PC-3 (cell line): ENCODE measurements at regions of chr3 and their contacts with region 1.

Region 1: GRCh38 chr3:141452036-141452435 is 34.8 kb upstream of the RASA2 start:
- DNase-seq: peak; percentile 52
- ATAC-seq: peak; percentile 56
- H3K4me3 ChIP-seq: no peak overlapping the region
- H3K27ac ChIP-seq: no peak overlapping the region
- H3K4me1 ChIP-seq: peaks cover 20% of the 10 kb centered on the region
- H3K27me3 ChIP-seq: no peaks in the 10 kb centered on the region
- CTCF ChIP-seq: peak; percentile 68

Region 2: DNA sequence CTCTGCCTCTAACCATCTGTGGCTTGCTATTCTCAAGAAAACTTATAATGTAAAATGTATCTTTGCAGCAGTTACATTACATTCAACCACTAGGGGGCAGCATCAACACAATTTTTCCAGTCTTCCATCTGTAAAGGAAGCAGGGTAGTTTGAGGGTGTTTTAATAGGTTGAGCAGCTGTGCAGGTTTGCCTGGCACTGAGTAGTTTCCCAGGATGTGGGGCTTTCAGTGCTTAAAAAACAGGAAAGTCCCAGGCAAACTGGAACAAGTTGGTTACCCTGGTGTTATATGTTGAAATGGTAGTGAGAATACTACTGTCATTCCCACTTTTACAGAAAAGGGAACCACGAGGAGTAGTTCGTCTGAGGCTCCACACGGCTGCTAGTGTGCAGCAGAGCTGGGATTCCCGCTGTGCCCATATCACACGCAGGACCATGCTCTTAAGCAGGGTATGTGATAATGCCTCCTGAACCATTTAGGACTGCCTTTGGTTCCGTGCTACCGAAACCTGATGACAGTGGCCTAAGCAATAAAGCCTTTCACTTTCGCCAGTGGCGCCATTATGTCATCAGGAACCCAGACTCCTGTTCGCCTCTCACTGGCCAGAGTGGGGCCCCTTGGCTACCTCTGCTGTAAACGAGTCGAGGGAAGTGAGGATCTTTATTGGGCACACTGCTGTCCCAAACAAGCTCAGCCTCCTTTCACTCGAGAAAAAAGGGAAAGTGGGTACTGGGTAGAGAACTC is 148.4 kb before region 1 on chr3:
- CTCF ChIA-PET with region 1: interaction called, 7 read pairs
- POLR2A ChIA-PET with region 1: no interaction called
- intact Hi-C with region 1: loop called (anchors 2 kb)
- DNase-seq: peak; percentile 82
- ATAC-seq: peak; percentile 66
- H3K4me3 ChIP-seq: no peak overlapping the region
- H3K27ac ChIP-seq: no peak overlapping the region
- H3K4me1 ChIP-seq: peaks cover 4% of the 10 kb centered on the region; the same call in 1 of the 2 replicates
- H3K27me3 ChIP-seq: no peaks in the 10 kb centered on the region
- CTCF ChIP-seq: peak; percentile 79

Region 3: DNA sequence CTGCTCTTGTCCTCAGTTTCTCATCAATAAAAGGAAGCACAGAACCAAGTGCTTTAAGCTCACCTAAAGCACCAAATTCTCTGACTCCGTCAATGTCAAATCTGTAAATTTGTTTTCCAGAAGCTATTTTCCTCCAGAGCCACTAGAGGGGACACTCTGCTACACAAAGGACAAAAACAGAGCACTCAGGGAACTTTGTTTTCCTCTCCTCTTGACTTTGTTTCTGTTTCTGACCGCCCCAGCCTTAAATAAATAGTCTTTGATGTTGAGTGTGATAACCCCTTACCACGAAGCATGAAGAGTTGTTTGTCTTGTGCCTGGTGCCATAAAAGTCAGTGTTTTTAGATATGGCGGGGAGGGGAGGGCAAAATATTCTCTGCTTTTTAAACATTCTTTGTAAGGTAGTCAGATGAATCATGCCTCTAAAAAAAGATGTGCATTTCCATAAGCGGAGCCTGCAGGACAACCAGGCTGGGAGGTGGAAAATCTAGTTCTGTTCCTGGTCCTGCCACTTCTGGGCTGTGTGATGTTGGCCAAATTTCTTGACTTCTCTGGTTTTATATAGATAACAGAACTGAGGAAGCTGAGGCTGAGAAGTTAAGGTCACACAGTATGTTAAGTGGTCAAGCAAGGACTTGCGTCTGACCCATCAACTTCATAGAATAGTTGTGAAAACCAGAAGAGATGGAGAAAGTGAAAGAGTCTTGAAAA is 91.0 kb before region 1 on chr3:
- CTCF ChIA-PET with region 1: interaction called, 11 read pairs
- POLR2A ChIA-PET with region 1: no interaction called
- intact Hi-C with region 1: loop called (anchors 1 kb)
- DNase-seq: peak; percentile 78
- ATAC-seq: peak; percentile 81
- H3K4me3 ChIP-seq: peak overlapping the region; percentile 39; the same call in 1 of the 2 replicates
- H3K27ac ChIP-seq: peak overlapping the region; percentile 42
- H3K4me1 ChIP-seq: peaks cover 12% of the 10 kb centered on the region
- H3K27me3 ChIP-seq: no peaks in the 10 kb centered on the region
- CTCF ChIP-seq: peak; percentile 85

Region 4: DNA sequence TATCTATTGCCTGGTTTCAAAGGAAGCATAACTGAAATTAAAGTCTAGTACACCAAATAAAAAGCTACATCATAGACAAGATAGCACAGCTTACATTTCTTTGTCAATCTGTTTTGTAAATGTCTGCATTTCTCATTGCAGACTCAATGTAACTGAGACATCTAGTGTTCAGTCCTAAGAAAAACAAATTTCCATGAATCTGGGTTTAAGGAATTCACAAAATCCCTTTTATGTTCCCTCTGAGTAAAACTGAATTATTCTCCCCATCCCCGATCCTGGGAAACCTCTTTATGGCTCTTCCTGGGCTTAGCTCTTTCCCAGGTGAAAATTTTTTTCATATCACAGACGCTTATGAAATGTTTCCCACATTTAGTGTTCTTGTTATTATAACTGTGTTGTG is 13.2 kb after region 1 on chr3:
- CTCF ChIA-PET with region 1: no interaction called
- POLR2A ChIA-PET with region 1: no interaction called
- intact Hi-C with region 1: no loop called
- DNase-seq: no peak
- ATAC-seq: peak; percentile 29; the same call in 1 of the 2 replicates
- H3K4me3 ChIP-seq: no peak overlapping the region
- H3K27ac ChIP-seq: no peak overlapping the region
- H3K4me1 ChIP-seq: no peaks in the 10 kb centered on the region
- H3K27me3 ChIP-seq: no peaks in the 10 kb centered on the region
- CTCF ChIP-seq: peak; percentile 41

Region 5: DNA sequence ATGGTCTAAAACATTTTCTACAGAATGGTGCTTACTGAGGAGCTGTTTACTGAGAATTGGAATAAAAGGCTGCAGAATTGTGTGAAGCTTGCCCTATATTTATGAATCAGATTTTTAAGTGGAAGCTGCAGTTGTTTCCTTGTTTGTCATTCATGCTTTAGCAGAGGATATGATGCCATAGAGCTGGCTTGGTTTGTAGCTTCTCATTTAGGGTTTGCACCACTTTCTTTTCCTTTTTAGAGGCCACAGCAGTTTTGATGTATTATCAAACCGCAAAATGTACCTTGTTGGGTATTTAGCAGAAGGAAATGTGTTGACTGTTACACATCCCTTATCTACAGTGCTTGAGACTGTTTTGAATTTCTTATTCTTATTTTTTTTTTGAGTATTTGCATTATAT is 101.0 kb after region 1 on chr3:
- CTCF ChIA-PET with region 1: no interaction called
- POLR2A ChIA-PET with region 1: no interaction called
- intact Hi-C with region 1: no loop called
- DNase-seq: no peak
- ATAC-seq: no peak
- H3K4me3 ChIP-seq: no peak overlapping the region
- H3K27ac ChIP-seq: no peak overlapping the region
- H3K4me1 ChIP-seq: no peaks in the 10 kb centered on the region
- H3K27me3 ChIP-seq: no peaks in the 10 kb centered on the region
- CTCF ChIP-seq: no peak